ENCODE measurements at regions of chr4 and their contacts with region 1.

Region 1: GRCh38 chr4:153916273-153916755 is 127.4 kb upstream of the SFRP2 start:
- DNase-seq: peak; percentile 57
- H3K4me3 Mint-ChIP-seq: no peak overlapping the region
- H3K27ac Mint-ChIP-seq: no peak overlapping the region
- H3K4me1 Mint-ChIP-seq: peaks cover 7% of the 10 kb centered on the region
- H3K27me3 Mint-ChIP-seq: peaks cover 15% of the 10 kb centered on the region

Region 2: GRCh38 chr4:153809307-153809706 is 107.0 kb before region 1 on chr4:
- CTCF ChIA-PET with region 1: no interaction called
- POLR2A ChIA-PET with region 1: no interaction called
- intact Hi-C with region 1: loop called (anchors 1 kb)
- DNase-seq: peak; percentile 55
- H3K4me3 Mint-ChIP-seq: no peak overlapping the region
- H3K27ac Mint-ChIP-seq: no peak overlapping the region
- H3K4me1 Mint-ChIP-seq: peaks cover 21% of the 10 kb centered on the region
- H3K27me3 Mint-ChIP-seq: peaks cover 2% of the 10 kb centered on the region

Region 3: DNA sequence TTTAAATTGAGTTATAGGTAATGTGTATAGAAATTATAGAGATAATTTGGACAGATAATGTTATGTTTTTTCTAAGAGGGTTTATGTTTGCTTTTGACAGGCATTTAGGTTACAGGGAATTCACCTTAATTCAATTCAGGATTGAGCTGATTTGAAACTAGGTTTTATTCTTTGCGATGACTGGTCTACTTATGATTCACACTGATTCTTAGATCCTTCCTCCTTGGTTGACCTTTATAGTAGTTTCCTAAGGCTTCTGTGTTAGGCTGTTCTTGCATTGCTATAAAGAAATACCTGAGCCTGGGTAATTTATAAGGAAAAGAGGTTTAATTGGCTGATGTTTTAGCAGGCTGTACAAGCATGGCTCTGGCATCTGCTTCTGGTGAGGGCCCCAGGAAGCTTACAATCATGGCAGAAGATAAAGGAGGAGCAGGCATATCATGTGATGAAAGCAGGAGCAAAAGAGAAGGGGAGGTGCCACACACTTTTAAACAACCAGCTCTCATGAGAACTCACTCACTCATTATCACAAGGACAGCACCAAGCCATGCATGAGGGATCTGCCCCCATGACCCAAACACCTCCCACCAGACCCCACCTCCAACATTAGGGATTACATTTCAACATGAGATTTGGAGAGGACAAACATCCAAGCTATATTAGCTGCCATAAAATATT is 27.6 kb after region 1 on chr4:
- CTCF ChIA-PET with region 1: no interaction called
- POLR2A ChIA-PET with region 1: interaction called, 4 read pairs
- intact Hi-C with region 1: loop called (anchors 1 kb)
- DNase-seq: no peak
- H3K4me3 Mint-ChIP-seq: no peak overlapping the region
- H3K27ac Mint-ChIP-seq: no peak overlapping the region
- H3K4me1 Mint-ChIP-seq: peaks cover 12% of the 10 kb centered on the region
- H3K27me3 Mint-ChIP-seq: peaks cover 28% of the 10 kb centered on the region

Region 4: DNA sequence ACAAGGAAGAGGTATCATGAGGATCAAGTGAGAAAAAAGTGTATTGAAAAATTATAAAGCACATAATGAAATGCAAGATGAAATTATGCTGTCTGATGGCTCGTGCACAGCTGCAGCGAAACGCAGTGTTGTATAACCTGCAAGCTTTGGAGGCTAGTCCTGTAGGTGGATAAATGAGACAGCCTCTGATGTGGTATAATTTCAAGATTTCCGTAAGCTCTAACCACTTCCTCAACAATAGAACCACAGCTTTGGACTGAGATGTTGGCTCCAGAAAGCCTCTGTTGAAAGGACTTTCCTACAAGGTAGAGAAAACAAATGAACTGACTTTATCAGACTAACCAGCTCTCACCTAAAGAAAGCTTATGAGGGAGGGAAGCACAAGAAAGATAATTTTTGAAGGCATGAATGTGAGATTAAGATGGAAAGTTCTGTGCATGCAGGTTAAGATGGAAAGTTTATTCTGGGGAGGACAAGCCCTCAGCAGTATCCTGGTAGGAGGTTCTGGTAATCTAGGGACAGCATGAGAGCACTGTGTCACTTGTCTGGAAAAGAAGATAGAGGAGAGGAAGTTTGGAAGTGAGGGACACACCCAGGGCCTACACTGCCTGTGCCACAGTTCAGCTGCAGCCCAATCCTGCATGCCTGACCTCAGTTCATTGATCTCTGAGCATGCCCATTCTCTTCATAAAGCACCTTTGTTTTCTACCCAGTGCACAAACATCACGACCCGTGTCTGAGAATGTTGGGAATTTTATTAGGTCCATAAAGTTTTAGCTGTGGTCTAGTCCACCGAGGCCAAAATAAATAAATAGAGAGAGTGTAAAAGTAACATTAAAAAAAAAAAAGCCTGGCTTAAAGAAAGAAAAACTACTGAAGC is 34.0 kb after region 1 on chr4:
- CTCF ChIA-PET with region 1: no interaction called
- POLR2A ChIA-PET with region 1: no interaction called
- intact Hi-C with region 1: loop called (anchors 2 kb)
- DNase-seq: peak; percentile 15
- H3K4me3 Mint-ChIP-seq: no peak overlapping the region
- H3K27ac Mint-ChIP-seq: no peak overlapping the region
- H3K4me1 Mint-ChIP-seq: peaks cover 21% of the 10 kb centered on the region
- H3K27me3 Mint-ChIP-seq: peaks cover 13% of the 10 kb centered on the region

Region 5: DNA sequence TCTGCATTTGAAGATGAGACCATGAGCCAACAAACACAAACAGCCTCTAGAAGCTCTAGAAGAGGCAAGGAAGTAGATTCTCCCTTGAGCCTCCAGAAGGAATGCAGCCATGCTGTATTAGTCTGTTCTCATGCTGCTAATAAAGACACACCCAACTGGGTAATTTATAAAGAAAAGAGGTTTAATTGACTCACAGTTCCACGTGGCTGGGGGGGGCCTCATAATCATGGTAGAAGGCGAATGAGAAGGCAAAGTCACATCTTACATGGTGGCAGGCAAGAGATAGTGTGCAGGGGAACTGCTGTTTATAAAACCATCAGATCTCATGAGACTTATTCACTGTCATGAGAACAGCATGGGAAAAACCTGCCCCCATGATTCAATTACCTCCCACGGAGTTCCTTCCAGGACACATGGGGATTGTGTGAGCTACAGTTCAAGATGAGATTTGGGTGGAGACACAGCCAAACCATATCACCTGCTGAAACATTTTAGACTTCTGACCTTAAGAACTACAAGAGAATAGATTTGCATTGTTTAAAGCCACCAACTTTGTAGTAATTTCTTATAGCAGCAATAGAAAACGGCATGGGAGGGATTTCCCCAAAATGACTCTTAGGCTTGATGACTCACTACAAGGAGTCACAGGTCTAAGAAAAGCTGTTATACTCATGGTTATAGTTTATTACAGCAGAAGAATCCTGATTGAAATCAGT is 157.0 kb after region 1 on chr4:
- CTCF ChIA-PET with region 1: no interaction called
- POLR2A ChIA-PET with region 1: no interaction called
- intact Hi-C with region 1: loop called (anchors 10 kb)
- DNase-seq: no peak
- H3K4me3 Mint-ChIP-seq: no peak overlapping the region
- H3K27ac Mint-ChIP-seq: no peak overlapping the region
- H3K4me1 Mint-ChIP-seq: peaks cover 5% of the 10 kb centered on the region
- H3K27me3 Mint-ChIP-seq: peaks cover 5% of the 10 kb centered on the region

Region 6: DNA sequence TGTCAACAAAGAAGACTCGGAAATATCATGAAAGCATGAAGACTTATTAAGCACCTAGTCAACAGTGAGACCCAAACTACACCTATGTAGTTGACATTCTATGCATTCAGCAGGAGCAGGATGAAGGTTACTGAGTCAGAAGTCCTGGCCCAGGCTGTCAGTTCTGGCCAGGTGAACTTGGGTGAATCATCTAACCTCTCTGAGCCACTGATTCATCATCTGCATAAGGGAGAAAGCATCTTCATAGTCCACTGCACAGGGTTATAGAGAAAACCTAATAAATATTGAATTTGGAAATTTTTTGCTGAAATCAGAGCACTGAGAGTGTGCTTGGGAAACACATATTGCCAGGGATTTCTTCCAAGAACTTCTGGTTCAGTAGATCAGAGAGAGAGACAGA is 168.6 kb after region 1 on chr4:
- CTCF ChIA-PET with region 1: no interaction called
- POLR2A ChIA-PET with region 1: no interaction called
- intact Hi-C with region 1: no loop called
- DNase-seq: no peak
- H3K4me3 Mint-ChIP-seq: no peak overlapping the region
- H3K27ac Mint-ChIP-seq: no peak overlapping the region
- H3K4me1 Mint-ChIP-seq: no peaks in the 10 kb centered on the region
- H3K27me3 Mint-ChIP-seq: peaks cover 1% of the 10 kb centered on the region

Region 7: DNA sequence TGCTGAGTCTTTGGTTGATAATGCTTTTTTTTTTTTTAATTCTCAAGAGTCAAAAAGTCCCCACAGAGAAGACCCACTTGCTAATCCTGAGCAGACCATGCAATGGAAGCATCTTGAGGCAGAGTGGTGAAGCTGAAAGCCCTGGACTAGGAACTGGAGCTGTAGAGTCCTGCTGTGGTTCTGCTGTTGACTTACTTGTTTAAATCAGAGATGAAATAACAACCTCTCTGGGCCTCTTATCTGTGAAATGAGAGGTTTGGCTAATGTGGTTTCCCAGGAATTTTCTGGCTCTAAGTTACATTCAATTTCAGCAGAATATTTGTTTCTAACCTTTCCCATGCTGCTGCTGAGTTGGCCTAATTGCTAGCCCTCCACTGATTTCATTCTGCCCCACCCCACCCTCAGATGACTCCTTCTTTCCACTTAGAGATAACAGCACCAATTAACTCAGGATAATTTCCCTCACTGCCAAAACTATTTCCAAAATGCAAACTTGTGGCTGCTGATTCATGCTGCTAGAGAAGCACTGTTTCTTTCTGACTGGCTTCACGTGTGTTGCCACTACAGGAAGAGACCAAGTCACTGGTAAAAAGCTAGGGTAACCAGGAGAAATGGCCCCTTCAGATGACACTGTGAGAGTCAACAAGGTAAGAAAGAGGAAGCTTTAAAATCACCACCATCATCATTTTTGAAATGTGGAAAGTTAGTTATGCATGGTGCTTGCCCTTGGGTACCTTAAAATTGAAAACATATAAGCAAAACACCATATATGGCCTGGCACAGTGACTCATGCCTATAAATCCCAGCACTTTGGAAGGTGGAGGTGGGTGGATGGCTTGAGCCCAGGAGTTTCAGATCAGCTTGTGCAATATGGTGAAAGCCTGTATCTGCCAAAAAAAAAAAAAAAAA is 248.9 kb after region 1 on chr4:
- CTCF ChIA-PET with region 1: no interaction called
- POLR2A ChIA-PET with region 1: no interaction called
- intact Hi-C with region 1: loop called (anchors 1 kb)
- DNase-seq: peak; percentile 49
- H3K4me3 Mint-ChIP-seq: no peak overlapping the region
- H3K27ac Mint-ChIP-seq: peak overlapping the region; percentile 11
- H3K4me1 Mint-ChIP-seq: peaks cover 16% of the 10 kb centered on the region
- H3K27me3 Mint-ChIP-seq: peaks cover 9% of the 10 kb centered on the region

Region 8: GRCh38 chr4:154332681-154333421 is 416.5 kb after region 1 on chr4:
- CTCF ChIA-PET with region 1: no interaction called
- POLR2A ChIA-PET with region 1: no interaction called
- intact Hi-C with region 1: loop called (anchors 10 kb)
- DNase-seq: peak; percentile 80
- H3K4me3 Mint-ChIP-seq: peak overlapping the region; percentile 61
- H3K27ac Mint-ChIP-seq: no peak overlapping the region
- H3K4me1 Mint-ChIP-seq: peaks cover 11% of the 10 kb centered on the region
- H3K27me3 Mint-ChIP-seq: peaks cover 26% of the 10 kb centered on the region